Ovary (tissue), 10 donors: ENCODE measurements at regions of chr2 and their contacts with region 1.

Region 1: DNA sequence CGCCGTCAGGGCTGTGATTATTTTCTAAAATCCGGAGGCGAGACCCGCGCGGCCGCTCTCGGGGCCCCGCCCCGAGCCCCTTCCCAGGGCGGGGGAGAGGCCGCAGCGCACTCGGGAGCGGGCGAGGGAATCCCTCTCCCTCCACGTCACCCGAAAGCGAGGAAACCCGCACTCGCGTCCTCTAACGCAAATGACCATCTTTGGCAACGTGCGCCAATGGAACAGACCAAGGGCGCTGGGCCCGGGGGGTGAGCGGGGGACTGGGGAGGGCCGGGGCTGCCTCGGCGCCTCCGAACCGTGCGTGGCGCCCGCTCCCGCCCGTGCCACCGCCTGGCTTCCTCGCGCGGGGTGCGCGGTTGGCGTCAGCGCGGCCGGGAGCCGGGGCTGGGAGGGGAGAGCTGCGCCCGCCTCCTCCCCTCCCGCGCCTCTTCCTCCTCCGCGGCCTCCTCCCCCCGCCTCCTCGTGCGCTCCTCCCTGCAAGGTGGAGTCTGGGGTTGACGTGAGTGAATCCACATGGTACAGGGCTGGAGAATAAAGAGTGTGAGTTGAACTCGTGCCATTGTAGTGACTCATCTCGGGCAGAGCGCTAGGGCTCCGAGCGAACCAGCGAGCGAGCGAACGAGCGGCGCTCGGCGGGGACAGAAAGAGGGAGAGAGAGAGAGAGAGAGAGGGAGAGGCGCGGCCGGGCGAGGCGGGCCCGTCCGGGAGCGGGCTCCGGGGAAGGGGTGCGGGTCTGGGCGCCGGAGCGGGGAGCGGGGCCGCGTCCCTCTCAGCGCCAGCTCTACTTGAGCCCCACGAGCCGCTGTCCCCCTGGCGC is at the start of gene FOSL2:
- DNase-seq: peak; percentile 96 to 98 (median 97)
- H3K4me3 ChIP-seq: peak within 1 kb of the TSS; percentile 85
- H3K27ac ChIP-seq: peak within 1 kb of the TSS; percentile 98 to 99
- H3K4me1 ChIP-seq: no peaks in the 10 kb centered on the region
- H3K27me3 ChIP-seq: no peaks in the 10 kb centered on the region
- CTCF ChIP-seq: peak in 1 of 3 donors; percentile 16
- EP300 ChIP-seq: peak; percentile 94
- POLR2A ChIP-seq: peak; percentile 98
- total RNA-seq, gene FOSL2: 117 to 322 (median 152) TPM

Region 2: DNA sequence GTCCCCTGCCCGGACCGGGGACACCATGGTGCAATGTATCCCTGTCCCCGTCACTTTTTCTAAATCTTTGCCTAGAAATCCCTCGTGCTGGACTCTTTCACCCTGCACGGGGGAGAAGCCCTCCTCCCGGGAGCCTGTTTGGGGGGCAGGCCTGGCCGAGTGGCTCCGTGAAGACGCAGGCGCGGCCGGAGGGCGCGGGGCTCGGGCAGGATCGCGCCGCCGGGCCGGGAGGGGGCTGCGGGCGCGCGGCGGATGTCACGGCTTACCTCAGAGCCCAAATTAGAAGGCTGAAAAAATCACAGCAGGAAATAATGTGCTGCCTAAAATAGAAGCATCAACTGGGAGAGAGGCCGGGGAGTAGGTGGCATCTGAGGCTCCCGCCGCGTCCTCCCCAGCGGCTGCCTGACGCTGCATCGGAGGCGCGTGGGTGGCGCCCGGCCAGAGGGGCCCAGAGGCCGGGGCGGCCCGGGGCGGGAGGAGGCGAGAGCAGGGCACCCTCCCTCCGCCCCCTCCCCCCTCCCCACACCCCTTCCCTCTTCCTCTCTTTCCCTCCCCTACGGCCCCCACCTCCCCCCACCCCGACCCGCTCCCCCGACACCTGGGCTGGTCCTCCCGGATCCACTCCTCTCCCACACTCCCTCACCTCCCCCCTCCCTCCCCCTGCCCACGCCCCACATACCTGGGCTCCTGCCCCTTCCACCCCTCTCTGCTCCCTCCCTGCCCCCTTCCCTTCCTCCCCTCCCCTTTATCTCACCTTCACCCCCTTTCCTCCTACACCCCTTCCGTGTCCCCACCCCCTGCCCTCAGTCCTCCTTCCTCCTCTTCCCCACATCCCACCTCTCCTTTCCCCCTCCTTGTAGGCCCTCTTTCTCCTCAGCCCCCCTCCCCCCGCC is 676.9 kb before region 1 on chr2:
- intact Hi-C with region 1: loop called in 3 of 4 experiments (anchors 2 to 5 kb)
- DNase-seq: peak; percentile 70 to 85 (median 79)
- H3K4me3 ChIP-seq: peak overlapping the region; percentile 42
- H3K27ac ChIP-seq: peak overlapping the region; percentile 11 to 52
- H3K4me1 ChIP-seq: peaks cover 6% of the 10 kb centered on the region
- H3K27me3 ChIP-seq: no peaks in the 10 kb centered on the region
- CTCF ChIP-seq: no peak
- EP300 ChIP-seq: no peak
- POLR2A ChIP-seq: peak; percentile 45

Region 3: DNA sequence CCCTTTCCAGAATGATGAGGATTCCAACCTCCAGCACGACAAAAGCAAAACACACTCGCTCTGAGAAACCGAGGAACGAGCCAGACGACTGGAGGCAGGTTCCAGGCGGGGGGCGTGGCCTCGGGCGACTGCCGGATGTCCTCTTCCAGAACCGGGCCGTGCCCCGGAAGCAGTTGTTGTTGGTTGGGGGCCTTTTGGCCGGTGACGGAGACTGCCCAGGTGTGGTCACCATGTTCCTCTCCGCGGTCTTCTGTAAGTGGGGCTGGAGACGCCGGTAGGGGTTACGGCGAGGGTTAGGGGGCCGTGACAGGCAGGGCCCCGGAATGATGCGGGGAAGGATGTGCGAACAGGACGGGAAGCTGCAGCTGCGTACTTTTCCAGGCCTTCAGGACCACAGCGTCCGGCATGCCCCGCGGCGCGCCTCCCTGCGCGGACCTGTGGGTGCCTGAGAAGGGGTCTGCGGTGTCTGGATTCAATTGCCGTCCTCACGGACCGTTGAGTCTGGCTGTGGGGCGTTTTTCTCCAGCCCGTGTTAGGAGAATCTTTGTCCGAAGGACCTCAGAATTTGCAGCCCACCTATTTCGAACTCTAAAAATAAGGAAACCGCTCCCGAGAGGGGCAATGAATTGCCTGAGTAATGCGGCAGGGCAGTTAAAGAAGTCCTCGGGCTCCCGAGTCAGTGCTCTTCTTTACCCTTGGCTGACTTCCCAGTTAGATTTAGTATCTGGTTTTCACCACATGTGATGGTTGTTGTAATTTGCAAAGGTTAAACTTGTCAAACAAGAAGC is 620.8 kb before region 1 on chr2 and contains the start of gene MRPL33:
- intact Hi-C with region 1: loop called in 2 of 4 experiments (anchors 5 to 10 kb)
- DNase-seq: peak; percentile 94 to 97 (median 95)
- H3K4me3 ChIP-seq: peak within 1 kb of the TSS; percentile 85
- H3K27ac ChIP-seq: peak within 1 kb of the TSS; percentile 69 to 70
- H3K4me1 ChIP-seq: peaks cover 7% of the 10 kb centered on the region
- H3K27me3 ChIP-seq: no peaks in the 10 kb centered on the region
- CTCF ChIP-seq: no peak
- EP300 ChIP-seq: no peak
- POLR2A ChIP-seq: peak; percentile 75
- total RNA-seq, gene MRPL33: 50.5 to 185 (median 62.4) TPM

Region 4: DNA sequence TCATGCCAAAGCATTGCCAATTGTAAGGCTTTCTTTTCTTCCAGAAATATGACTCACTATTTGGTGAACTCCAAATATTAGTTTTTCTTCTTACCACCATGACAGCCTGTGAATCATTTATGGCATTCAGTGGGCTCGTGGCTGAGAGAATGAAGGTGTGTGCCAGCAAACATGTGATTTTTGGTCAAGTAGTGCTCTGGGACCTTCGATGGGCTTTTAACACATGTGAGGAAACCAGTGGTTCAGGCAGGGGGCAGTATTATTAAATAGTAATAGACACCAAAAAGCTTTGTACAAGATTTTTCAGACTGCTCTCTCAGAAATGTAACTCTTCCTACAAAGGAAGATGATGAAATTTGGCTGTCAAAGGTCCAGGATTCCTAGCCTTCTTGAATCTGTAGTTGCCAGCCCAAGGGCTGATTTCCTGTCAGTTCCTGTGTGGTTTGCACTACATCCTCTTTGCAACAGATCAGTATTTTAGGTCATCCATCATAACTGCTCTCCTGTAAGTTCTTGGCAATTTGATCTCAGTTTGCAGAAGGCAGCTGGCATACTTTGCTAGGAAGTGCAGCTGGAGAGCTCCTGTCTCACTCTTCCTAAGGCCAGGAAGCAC is 437.6 kb before region 1 on chr2:
- intact Hi-C with region 1: loop called in 2 of 4 experiments (anchors 2 to 5 kb)
- DNase-seq: peak in 2 of 5 donors; percentile 34 to 56
- H3K4me3 ChIP-seq: no peak overlapping the region
- H3K27ac ChIP-seq: peak overlapping the region in 1 of 2 donors; percentile 52
- H3K4me1 ChIP-seq: peaks cover 1% of the 10 kb centered on the region
- H3K27me3 ChIP-seq: no peaks in the 10 kb centered on the region
- CTCF ChIP-seq: peak in 2 of 3 donors; percentile 27 to 36
- EP300 ChIP-seq: no peak
- POLR2A ChIP-seq: no peak

Region 5: DNA sequence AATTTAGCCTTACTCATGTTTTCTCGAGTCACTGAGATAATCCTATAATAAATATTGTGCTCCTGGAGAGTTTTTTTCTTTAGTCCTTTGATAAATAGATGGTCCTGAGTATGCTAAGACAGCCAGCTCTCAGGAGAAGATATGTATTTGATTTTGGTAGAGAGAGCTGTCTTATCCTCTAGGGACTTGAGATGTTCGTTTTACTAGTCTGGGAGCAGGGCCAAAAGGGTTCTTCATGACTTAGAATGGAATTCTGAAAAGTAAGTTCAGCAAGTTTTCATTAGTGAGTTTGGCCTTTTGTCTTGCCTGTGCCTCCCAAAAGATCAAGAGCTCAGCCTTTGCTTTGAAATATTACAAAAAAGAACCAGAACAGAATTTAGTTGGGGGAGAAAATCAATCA is 255.3 kb before region 1 on chr2:
- intact Hi-C with region 1: loop called in 1 of 4 experiments (anchors 10 kb)
- DNase-seq: peak in 3 of 5 donors; percentile 53 to 63 (median 62)
- H3K4me3 ChIP-seq: no peak overlapping the region
- H3K27ac ChIP-seq: peak overlapping the region in 1 of 2 donors; percentile 57
- H3K4me1 ChIP-seq: peaks cover 10% of the 10 kb centered on the region
- H3K27me3 ChIP-seq: no peaks in the 10 kb centered on the region
- CTCF ChIP-seq: no peak
- EP300 ChIP-seq: no peak
- POLR2A ChIP-seq: no peak

Region 6: DNA sequence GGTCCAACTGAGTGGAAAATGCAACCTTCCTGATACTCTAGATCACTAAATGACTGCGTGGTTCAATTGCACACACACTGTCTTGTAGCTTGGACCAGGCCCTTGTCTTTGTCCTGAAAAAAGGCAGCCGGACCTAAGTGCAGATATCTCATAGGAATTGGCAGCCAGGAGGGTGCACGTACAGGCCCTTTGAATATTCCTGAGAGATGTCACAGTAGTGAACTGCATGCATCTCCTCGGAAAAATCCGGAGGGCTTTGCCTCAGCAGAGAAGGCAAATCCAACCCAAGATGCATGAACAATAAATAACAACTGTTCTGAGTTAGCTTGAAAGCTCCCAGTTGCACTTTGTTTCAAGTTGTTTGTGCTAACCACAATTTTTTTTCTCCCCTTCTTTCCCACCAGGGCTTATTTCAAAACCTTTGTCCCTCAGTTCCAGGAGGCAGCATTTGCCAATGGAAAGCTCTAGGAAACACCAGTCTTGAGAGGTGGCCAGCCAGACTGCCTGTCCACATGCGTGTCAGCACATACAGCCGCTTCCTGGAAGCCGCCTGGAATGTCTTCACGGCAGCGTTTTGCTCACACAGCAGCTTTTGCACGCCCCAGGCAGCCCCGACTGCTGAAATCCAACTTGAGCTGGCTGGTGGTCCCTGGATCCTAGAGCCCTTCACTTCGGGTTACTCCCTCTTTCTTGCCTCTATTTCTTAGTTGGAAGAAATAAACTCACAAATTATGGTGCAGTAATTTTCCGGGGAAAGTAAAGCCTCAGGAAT is 54.3 kb before region 1 on chr2:
- intact Hi-C with region 1: loop called in 1 of 4 experiments (anchors 5 kb)
- DNase-seq: peak; percentile 64 to 80 (median 72)
- H3K4me3 ChIP-seq: no peak overlapping the region
- H3K27ac ChIP-seq: peak overlapping the region; percentile 30 to 44
- H3K4me1 ChIP-seq: peaks cover 21% of the 10 kb centered on the region
- H3K27me3 ChIP-seq: no peaks in the 10 kb centered on the region
- CTCF ChIP-seq: no peak
- EP300 ChIP-seq: peak; percentile 54
- POLR2A ChIP-seq: no peak

Region 7: DNA sequence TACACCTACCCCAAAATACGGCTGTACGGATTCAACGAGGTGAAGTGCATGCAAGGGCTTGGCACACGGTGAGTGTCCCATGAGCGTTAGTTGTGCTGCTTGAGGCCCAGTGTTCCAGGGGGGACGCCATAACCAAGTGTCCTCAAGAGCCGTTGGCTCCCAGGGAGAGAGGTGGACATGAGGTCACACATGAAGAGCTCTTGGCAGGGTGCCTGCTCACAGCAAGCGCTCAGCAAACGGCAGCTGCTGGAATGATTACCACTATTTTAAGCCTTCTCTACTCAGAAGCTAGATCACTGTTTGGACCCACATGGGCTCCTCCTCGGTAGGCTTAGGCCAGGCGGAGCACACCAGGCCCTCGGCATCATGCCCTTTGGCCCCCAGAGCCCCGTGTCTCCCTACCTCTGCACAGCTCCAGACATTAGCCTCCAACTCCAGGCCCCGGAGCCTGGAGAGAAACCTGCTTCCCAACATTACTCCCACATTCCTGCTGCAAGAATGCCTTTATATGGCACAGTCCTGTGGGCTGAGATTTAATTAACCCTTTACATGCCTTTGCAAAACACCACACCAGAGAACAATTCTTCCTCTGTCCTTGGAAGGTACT is 290.7 kb after region 1 on chr2:
- intact Hi-C with region 1: no loop called
- DNase-seq: peak; percentile 69 to 85 (median 79)
- H3K4me3 ChIP-seq: no peak overlapping the region
- H3K27ac ChIP-seq: no peak overlapping the region
- H3K4me1 ChIP-seq: peaks cover 11% of the 10 kb centered on the region
- H3K27me3 ChIP-seq: no peaks in the 10 kb centered on the region
- CTCF ChIP-seq: no peak
- EP300 ChIP-seq: no peak
- POLR2A ChIP-seq: no peak

Region 8: DNA sequence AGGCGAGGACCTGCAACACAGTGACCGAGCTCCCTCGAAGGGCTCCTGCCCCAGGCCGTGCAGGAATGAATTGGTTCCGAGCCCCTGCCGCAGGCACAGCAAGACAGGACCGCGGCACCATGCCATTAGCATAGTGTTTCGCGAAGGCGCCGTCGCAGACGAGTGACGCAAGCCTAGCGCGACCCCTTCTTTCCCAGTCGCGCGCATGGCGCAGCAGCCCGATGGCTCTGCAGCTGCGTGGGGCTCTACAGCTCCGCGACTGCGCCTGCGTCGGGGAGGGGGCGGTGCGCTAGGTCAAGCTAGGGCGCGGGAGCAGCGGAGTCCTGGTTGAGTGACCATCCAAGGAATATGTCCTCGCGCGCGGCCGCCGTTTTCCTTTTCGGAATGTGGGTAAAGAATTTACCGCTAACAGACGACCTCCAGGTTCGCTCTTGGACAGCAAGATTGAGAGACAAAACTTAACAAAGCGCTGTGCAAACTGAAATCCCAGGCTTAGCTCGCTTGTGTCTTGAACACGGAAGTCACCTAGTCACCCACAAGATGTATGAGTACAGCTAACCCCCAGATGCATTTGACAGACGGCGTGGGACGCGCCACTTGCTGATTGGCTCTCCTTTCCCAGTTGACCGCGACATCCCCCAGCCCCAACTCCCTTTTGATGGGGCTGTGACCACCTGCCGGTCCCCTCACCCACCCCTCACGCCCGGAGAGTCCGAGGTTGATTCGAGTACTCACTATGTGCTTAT is 477.8 kb after region 1 on chr2 and contains the start of gene TRMT61B:
- intact Hi-C with region 1: no loop called
- DNase-seq: peak; percentile 94 to 98 (median 95)
- H3K4me3 ChIP-seq: peak within 1 kb of the TSS; percentile 88
- H3K27ac ChIP-seq: peak within 1 kb of the TSS; percentile 2 to 48
- H3K4me1 ChIP-seq: peaks cover 11% of the 10 kb centered on the region
- H3K27me3 ChIP-seq: no peaks in the 10 kb centered on the region
- CTCF ChIP-seq: peak in 1 of 3 donors; percentile 25
- EP300 ChIP-seq: no peak
- POLR2A ChIP-seq: peak; percentile 53
- total RNA-seq, gene TRMT61B: 8.1 to 18.4 (median 14.2) TPM